GM12878 (cell line): ENCODE measurements at regions of chr3 and their contacts with region 1.

Region 1: DNA sequence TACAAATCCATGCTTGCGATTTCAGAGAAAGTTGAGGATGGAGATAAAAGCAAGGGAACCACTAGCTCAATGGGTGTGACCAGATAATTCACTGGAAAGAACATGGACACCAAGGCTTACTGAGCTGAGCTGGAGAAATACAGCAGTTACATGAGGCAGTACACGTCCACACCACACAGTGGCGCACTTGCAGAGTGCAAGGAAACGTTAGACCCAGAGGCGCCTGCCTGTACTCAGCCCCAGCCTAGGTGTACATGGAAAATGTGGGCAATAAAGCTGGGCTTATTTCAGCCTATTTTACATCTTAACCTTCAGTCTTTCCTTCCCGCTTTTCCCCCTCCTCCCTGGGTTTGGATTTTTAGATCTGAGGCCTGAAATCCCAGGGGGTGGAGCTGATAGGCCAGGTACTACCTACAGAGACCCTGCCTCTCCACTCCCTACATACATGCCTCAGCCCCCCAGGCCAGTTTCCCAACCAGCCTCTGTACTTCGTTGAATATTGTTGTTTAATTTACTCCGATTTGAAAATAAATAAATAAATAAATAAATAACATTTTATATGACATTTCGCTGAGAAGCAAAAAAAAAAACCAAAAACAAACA is 60.1 kb downstream of the PCOLCE2 start:
- DNase-seq: peak; percentile 31
- ATAC-seq: peak; percentile 100
- H3K4me3 ChIP-seq: no peak overlapping the region
- H3K27ac ChIP-seq: no peak overlapping the region
- H3K4me1 ChIP-seq: no peaks in the 10 kb centered on the region
- H3K27me3 ChIP-seq: no peaks in the 10 kb centered on the region
- CTCF ChIP-seq: peak; percentile 88 to 94 (median 92); a peak in 5 of 6 replicates
- EP300 ChIP-seq: no peak
- POLR2A ChIP-seq: no peak
- RAD21 ChIP-seq: peak; percentile 88

Region 2: DNA sequence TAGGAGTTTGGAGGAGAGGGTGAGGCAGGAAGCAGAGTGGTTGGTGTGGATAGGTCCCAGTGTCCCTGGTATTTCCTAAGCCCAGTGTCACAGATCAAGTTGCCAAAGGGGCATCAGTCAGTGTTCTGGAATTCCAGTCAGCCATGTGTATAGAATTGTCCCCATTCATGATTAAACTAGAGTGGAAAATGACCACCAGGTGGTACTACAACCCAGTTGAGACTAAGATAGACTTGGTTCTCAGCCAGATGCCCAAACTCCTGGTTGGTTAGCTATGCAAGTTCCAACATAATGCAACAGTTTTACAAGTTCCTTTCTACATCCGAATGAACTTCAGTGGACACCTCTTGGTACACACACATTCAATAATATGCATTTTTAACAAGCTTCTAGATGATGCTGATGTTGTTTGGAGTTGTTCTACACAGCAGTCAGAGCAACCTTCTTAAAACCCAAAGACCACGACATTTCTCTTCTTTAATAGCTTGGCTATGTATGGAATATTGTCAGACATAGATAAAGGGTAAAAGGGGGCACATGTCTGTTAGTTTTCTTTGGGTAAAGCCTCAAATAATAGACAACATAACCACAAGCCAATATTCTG is 241.9 kb before region 1 on chr3:
- CTCF ChIA-PET with region 1: interaction called, 10 read pairs
- POLR2A ChIA-PET with region 1: no interaction called
- RAD21 ChIA-PET with region 1: interaction called, 3 read pairs
- SMC1A ChIA-PET with region 1: no interaction called
- in situ Hi-C with region 1: no loop called
- intact Hi-C with region 1: loop called (anchors 5 kb)
- DNase-seq: no peak
- ATAC-seq: peak; percentile 88
- H3K4me3 ChIP-seq: no peak overlapping the region
- H3K27ac ChIP-seq: no peak overlapping the region
- H3K4me1 ChIP-seq: no peaks in the 10 kb centered on the region
- H3K27me3 ChIP-seq: no peaks in the 10 kb centered on the region
- CTCF ChIP-seq: peak; percentile 49 to 68 (median 50); a peak in 4 of 6 replicates
- EP300 ChIP-seq: no peak
- POLR2A ChIP-seq: no peak
- RAD21 ChIP-seq: peak; percentile 59

Region 3: GRCh38 chr3:142839831-142840230 is 11.0 kb after region 1 on chr3:
- CTCF ChIA-PET with region 1: interaction called, 19 read pairs
- POLR2A ChIA-PET with region 1: no interaction called
- RAD21 ChIA-PET with region 1: interaction called, 3 read pairs
- SMC1A ChIA-PET with region 1: interaction called, 7 read pairs
- in situ Hi-C with region 1: no loop called
- intact Hi-C with region 1: no loop called
- DNase-seq: no peak
- ATAC-seq: no peak
- H3K4me3 ChIP-seq: no peak overlapping the region
- H3K27ac ChIP-seq: no peak overlapping the region
- H3K4me1 ChIP-seq: no peaks in the 10 kb centered on the region
- H3K27me3 ChIP-seq: no peaks in the 10 kb centered on the region; a peak in 2 of 4 replicates
- CTCF ChIP-seq: no peak
- EP300 ChIP-seq: no peak
- POLR2A ChIP-seq: no peak
- RAD21 ChIP-seq: no peak

Region 4: DNA sequence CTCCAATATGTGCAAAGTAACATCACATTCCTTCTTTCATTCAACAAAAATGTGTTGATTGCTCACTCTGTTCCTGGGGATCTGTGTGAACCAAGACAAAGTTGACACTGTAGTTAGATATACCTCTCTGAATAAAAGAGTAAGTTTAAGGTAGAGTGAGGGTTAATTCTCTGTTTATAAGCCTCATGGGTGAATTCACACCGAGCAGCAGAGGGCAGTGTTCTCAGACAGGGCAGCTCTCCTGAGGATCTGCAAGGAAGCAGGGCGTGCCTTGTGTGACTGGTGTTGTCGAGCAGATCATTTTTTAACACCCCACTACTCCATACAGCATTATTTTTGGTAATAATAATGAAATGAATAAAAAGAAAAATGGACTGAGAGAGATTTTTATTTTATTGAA is 100.3 kb after region 1 on chr3:
- CTCF ChIA-PET with region 1: interaction called, 14 read pairs
- POLR2A ChIA-PET with region 1: no interaction called
- RAD21 ChIA-PET with region 1: no interaction called
- SMC1A ChIA-PET with region 1: interaction called, 7 read pairs
- in situ Hi-C with region 1: no loop called
- intact Hi-C with region 1: no loop called
- DNase-seq: no peak
- ATAC-seq: peak; percentile 92
- H3K4me3 ChIP-seq: no peak overlapping the region
- H3K27ac ChIP-seq: no peak overlapping the region
- H3K4me1 ChIP-seq: no peaks in the 10 kb centered on the region
- H3K27me3 ChIP-seq: no peaks in the 10 kb centered on the region
- CTCF ChIP-seq: peak; percentile 60 to 67 (median 63); a peak in 5 of 6 replicates
- EP300 ChIP-seq: no peak
- POLR2A ChIP-seq: no peak
- RAD21 ChIP-seq: peak; percentile 65

Region 5: GRCh38 chr3:142993958-142994442 is 165.2 kb after region 1 on chr3:
- CTCF ChIA-PET with region 1: interaction called, 136 read pairs
- POLR2A ChIA-PET with region 1: no interaction called
- RAD21 ChIA-PET with region 1: interaction called, 43 read pairs
- SMC1A ChIA-PET with region 1: interaction called, 26 read pairs
- in situ Hi-C with region 1: loop called (anchors 5 kb)
- intact Hi-C with region 1: loop called (anchors 1 kb)
- DNase-seq: no peak
- ATAC-seq: peak; percentile 81
- H3K4me3 ChIP-seq: no peak overlapping the region
- H3K27ac ChIP-seq: no peak overlapping the region
- H3K4me1 ChIP-seq: 0 out of 2 replicates have a peak, but pooled peaks cover 3% of the 10 kb centered on the region
- H3K27me3 ChIP-seq: no peaks in the 10 kb centered on the region
- CTCF ChIP-seq: peak; percentile 68 to 83 (median 75)
- EP300 ChIP-seq: no peak
- POLR2A ChIP-seq: no peak
- RAD21 ChIP-seq: peak; percentile 83

Region 6: GRCh38 chr3:143040261-143040879 is 211.6 kb after region 1 on chr3:
- CTCF ChIA-PET with region 1: interaction called, 10 read pairs
- POLR2A ChIA-PET with region 1: no interaction called
- RAD21 ChIA-PET with region 1: interaction called, 8 read pairs
- SMC1A ChIA-PET with region 1: interaction called, 8 read pairs
- in situ Hi-C with region 1: no loop called
- intact Hi-C with region 1: no loop called
- DNase-seq: no peak
- ATAC-seq: peak; percentile 48; the same call in 1 of the 3 replicates
- H3K4me3 ChIP-seq: no peak overlapping the region
- H3K27ac ChIP-seq: no peak overlapping the region
- H3K4me1 ChIP-seq: no peaks in the 10 kb centered on the region
- H3K27me3 ChIP-seq: no peaks in the 10 kb centered on the region
- CTCF ChIP-seq: peak; percentile 33 to 47 (median 40); a peak in 5 of 6 replicates
- EP300 ChIP-seq: no peak
- POLR2A ChIP-seq: no peak
- RAD21 ChIP-seq: peak; percentile 34; the same call in 1 of the 2 replicates

Region 7: DNA sequence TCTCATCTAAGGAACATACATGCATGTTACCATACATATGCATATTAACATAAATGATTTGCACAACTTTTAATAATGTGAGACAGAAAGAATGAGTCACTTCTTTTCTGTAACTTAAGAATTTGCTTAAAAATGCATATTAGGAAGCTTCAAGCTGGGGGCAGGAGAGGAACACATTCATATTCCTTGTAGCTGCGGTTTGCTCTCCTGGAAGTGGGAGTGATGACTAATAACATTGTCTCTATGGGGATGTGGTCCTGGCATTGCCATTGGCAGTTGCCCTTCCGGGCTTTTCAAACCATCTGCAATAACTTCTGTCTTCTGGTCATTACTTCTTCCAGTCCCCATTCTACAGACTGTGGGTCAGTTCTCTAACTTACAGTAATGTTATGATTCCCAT is 306.3 kb after region 1 on chr3:
- CTCF ChIA-PET with region 1: no interaction called
- POLR2A ChIA-PET with region 1: no interaction called
- RAD21 ChIA-PET with region 1: no interaction called
- SMC1A ChIA-PET with region 1: no interaction called
- in situ Hi-C with region 1: no loop called
- intact Hi-C with region 1: no loop called
- DNase-seq: no peak
- ATAC-seq: no peak; the same call in 2 of the 3 replicates
- H3K4me3 ChIP-seq: no peak overlapping the region
- H3K27ac ChIP-seq: no peak overlapping the region
- H3K4me1 ChIP-seq: no peaks in the 10 kb centered on the region; the same call in none of the 2 replicates
- H3K27me3 ChIP-seq: no peaks in the 10 kb centered on the region
- CTCF ChIP-seq: no peak
- EP300 ChIP-seq: no peak
- POLR2A ChIP-seq: no peak
- RAD21 ChIP-seq: no peak